PC-3 (cell line): ENCODE measurements at regions of chr1 and their contacts with region 1.

Region 1: GRCh38 chr1:72734415-72734814 is 452.1 kb upstream of the NEGR1 start:
- DNase-seq: no peak
- ATAC-seq: peak; percentile 56
- H3K4me3 ChIP-seq: no peak overlapping the region
- H3K27ac ChIP-seq: no peak overlapping the region
- H3K4me1 ChIP-seq: no peaks in the 10 kb centered on the region
- H3K27me3 ChIP-seq: no peaks in the 10 kb centered on the region
- CTCF ChIP-seq: no peak

Region 2: DNA sequence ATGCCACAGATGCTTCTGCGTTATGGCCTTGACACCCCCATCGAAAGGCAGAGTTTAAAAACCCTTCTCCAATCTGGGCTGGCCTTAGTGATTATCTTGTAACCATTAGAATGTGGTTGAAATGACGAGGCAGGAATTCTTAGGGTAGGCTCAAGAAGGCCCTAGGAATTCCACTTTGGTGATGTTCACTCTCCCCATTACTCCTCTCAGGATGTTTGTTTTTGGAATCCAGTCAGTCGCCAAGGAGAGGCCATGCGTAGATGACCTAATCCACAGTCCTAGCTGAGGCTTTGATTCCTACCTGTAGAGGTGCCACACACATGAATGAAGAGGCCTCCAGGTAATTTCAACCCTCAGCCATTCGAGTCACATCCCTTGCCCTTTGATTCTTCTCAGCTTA is 770.2 kb before region 1 on chr1:
- CTCF ChIA-PET with region 1: no interaction called
- POLR2A ChIA-PET with region 1: no interaction called
- intact Hi-C with region 1: no loop called
- DNase-seq: peak; percentile 7
- ATAC-seq: no peak
- H3K4me3 ChIP-seq: no peak overlapping the region
- H3K27ac ChIP-seq: no peak overlapping the region
- H3K4me1 ChIP-seq: no peaks in the 10 kb centered on the region
- H3K27me3 ChIP-seq: no peaks in the 10 kb centered on the region
- CTCF ChIP-seq: no peak

Region 3: DNA sequence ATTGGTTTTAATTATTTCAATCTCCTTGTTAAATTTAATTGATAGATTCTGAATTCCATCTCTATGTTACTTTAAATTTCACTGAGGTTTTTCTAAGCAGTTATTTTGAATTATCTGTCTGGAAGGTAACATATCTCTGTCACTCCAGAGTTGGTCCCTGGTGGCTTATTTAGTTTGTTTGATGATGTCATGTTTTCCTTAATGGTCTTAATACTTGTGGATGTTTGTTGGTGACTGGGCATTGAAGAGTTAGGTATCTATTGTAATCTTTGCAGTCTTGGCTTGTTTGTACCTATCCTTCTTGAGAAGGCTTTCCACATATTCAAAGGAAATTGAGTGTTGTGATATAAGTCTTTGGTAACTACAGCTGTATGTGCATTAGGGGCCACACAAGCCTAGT is 358.0 kb after region 1 on chr1:
- CTCF ChIA-PET with region 1: no interaction called
- POLR2A ChIA-PET with region 1: no interaction called
- intact Hi-C with region 1: loop called (anchors 10 kb)
- DNase-seq: no peak
- ATAC-seq: no peak
- H3K4me3 ChIP-seq: no peak overlapping the region
- H3K27ac ChIP-seq: no peak overlapping the region
- H3K4me1 ChIP-seq: no peaks in the 10 kb centered on the region
- H3K27me3 ChIP-seq: no peaks in the 10 kb centered on the region
- CTCF ChIP-seq: no peak